Activated naive CD8-positive, alpha-beta T cell treated with anti-CD3 and anti-CD28 coated beads, Interleukin-2, amount 10 ng/mL, durations not matched to agents 7 days and 5 days (primary cell): ENCODE measurements at regions of chr14 and their contacts with region 1.

Region 1: GRCh38 chr14:22852940-22853767 is 16.8 kb downstream of the MMP14 start:
- DNase-seq: peak; percentile 95
- ATAC-seq: peak; percentile 82
- H3K4me3 Mint-ChIP-seq: peak overlapping the region; percentile 82
- H3K27ac Mint-ChIP-seq: peak overlapping the region; percentile 80
- H3K4me1 Mint-ChIP-seq: peaks cover 30% of the 10 kb centered on the region
- H3K27me3 Mint-ChIP-seq: peaks cover 35% of the 10 kb centered on the region

Region 2: GRCh38 chr14:22822571-22823098 is 30.5 kb before region 1 on chr14:
- POLR2A ChIA-PET with region 1: interaction called, 27 read pairs
- DNase-seq: peak; percentile 79
- ATAC-seq: peak; percentile 85
- H3K4me3 Mint-ChIP-seq: peak overlapping the region; percentile 68
- H3K27ac Mint-ChIP-seq: no peak overlapping the region
- H3K4me1 Mint-ChIP-seq: peaks cover 22% of the 10 kb centered on the region
- H3K27me3 Mint-ChIP-seq: peaks cover 23% of the 10 kb centered on the region